Activated CD4-positive, alpha-beta memory T cell treated with anti-CD3 and anti-CD28 coated beads for 36 hours (primary cell): ENCODE measurements at regions of chr21 and their contacts with region 1.

Region 1: DNA sequence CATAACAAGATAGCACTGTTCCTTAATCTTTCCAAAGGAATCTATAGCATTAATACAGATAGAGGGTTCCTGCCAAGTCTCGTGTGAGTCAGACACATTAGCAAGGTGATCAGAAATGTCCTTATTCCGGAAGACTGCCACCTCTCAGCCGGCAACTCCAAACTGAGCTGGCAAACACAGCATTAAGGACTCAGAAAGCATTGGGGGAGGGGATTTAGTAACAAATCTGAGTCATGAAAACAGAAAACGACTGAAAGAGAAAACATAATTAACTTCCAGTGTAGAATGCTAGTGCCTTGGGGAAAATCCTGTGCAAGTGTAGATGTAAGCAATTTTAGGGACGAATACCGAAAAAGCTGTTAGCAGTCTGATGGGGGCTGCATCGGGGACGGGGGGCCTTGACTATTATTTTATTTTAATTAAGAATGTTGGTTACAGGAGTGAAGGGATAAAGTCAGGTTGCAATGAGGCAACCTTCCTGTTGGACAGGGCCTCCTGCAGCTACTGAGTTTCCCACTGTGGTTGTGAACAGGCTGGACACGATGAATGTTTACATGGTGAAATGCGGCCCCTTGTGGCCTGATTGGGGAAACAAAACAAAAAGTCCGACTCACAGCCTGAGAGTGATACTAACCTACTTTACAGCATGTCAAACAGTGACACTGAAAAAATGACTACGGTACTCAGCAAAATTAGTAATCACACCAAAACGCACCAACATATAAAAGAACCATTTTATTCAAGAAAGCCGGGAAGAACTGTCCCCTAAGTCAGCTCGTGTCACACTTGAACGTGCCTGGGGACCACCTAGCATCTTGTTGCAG is 20.7 kb downstream of the MIS18A start:
- DNase-seq: peak; percentile 64
- H3K4me3 Mint-ChIP-seq: no peak overlapping the region
- H3K27ac Mint-ChIP-seq: no peak overlapping the region
- H3K4me1 Mint-ChIP-seq: no peaks in the 10 kb centered on the region
- H3K27me3 Mint-ChIP-seq: peaks cover 8% of the 10 kb centered on the region

Region 2: GRCh38 chr21:31786164-31786920 is 471.8 kb before region 1 on chr21:
- CTCF ChIA-PET with region 1: interaction called, 7 read pairs
- POLR2A ChIA-PET with region 1: no interaction called
- intact Hi-C with region 1: loop called (anchors 1 kb)
- DNase-seq: no peak
- H3K4me3 Mint-ChIP-seq: no peak overlapping the region
- H3K27ac Mint-ChIP-seq: no peak overlapping the region
- H3K4me1 Mint-ChIP-seq: no peaks in the 10 kb centered on the region
- H3K27me3 Mint-ChIP-seq: peaks cover 10% of the 10 kb centered on the region

Region 3: DNA sequence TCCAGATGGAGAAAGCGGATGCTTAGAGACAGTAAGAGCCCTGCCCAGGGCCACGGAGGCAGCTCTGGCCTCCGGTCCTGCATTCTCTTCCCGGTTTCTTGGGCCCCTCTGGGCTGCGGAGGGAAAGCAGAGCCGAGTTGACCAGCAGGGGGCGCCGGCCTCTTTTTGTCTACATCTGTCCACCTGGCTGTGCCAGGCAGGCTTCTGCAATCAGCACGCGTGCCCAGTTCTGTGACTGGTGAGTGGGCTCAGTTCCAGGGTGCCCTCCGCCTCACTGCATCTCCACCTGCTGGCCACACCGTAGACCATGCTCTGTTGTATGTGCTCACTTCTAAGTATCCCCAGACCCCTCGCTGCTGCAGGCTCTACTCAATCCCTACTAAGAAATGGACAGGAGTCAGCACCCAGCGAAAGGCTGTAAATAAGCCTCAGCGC is 392.1 kb before region 1 on chr21:
- CTCF ChIA-PET with region 1: interaction called, 25 read pairs
- POLR2A ChIA-PET with region 1: no interaction called
- intact Hi-C with region 1: loop called (anchors 1 kb)
- DNase-seq: peak; percentile 80
- H3K4me3 Mint-ChIP-seq: no peak overlapping the region
- H3K27ac Mint-ChIP-seq: no peak overlapping the region
- H3K4me1 Mint-ChIP-seq: no peaks in the 10 kb centered on the region
- H3K27me3 Mint-ChIP-seq: peaks cover 12% of the 10 kb centered on the region

Region 4: GRCh38 chr21:31873696-31874599 is 384.2 kb before region 1 on chr21:
- CTCF ChIA-PET with region 1: interaction called, 9 read pairs
- POLR2A ChIA-PET with region 1: no interaction called
- intact Hi-C with region 1: loop called (anchors 2 kb)
- DNase-seq: peak; percentile 57
- H3K4me3 Mint-ChIP-seq: no peak overlapping the region
- H3K27ac Mint-ChIP-seq: no peak overlapping the region
- H3K4me1 Mint-ChIP-seq: peaks cover 6% of the 10 kb centered on the region
- H3K27me3 Mint-ChIP-seq: peaks cover 40% of the 10 kb centered on the region

Region 5: GRCh38 chr21:32073190-32073589 is 185.0 kb before region 1 on chr21:
- CTCF ChIA-PET with region 1: no interaction called
- POLR2A ChIA-PET with region 1: no interaction called
- intact Hi-C with region 1: no loop called
- DNase-seq: no peak
- H3K4me3 Mint-ChIP-seq: no peak overlapping the region
- H3K27ac Mint-ChIP-seq: no peak overlapping the region
- H3K4me1 Mint-ChIP-seq: no peaks in the 10 kb centered on the region
- H3K27me3 Mint-ChIP-seq: peaks cover 2% of the 10 kb centered on the region

Region 6: DNA sequence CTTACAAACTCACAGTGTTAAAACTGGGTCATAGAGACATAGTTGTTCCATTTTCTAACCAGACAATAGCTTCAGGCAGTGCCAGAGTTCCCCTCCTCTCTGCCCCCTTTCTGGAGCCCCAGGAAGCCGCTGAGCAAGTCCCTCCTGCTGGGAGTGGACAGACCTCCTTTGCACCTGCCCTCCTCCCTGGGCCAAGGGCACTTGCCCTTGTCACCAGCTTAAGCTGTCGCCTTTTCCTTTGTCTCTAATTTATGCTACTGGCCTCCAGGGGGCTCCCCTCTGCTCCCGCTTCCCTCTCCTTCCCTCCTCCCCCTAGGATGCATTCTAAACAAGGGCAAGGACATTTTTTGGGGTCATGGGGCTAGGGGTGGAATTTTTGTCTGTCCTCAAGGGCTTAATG is 161.8 kb before region 1 on chr21:
- CTCF ChIA-PET with region 1: interaction called, 8 read pairs
- POLR2A ChIA-PET with region 1: no interaction called
- intact Hi-C with region 1: loop called (anchors 2 kb)
- DNase-seq: peak; percentile 16
- H3K4me3 Mint-ChIP-seq: no peak overlapping the region
- H3K27ac Mint-ChIP-seq: no peak overlapping the region
- H3K4me1 Mint-ChIP-seq: no peaks in the 10 kb centered on the region
- H3K27me3 Mint-ChIP-seq: peaks cover 8% of the 10 kb centered on the region